Thyroid gland (tissue), 4 donors: ENCODE measurements at regions of chr4 and their contacts with region 1.

Region 1: DNA sequence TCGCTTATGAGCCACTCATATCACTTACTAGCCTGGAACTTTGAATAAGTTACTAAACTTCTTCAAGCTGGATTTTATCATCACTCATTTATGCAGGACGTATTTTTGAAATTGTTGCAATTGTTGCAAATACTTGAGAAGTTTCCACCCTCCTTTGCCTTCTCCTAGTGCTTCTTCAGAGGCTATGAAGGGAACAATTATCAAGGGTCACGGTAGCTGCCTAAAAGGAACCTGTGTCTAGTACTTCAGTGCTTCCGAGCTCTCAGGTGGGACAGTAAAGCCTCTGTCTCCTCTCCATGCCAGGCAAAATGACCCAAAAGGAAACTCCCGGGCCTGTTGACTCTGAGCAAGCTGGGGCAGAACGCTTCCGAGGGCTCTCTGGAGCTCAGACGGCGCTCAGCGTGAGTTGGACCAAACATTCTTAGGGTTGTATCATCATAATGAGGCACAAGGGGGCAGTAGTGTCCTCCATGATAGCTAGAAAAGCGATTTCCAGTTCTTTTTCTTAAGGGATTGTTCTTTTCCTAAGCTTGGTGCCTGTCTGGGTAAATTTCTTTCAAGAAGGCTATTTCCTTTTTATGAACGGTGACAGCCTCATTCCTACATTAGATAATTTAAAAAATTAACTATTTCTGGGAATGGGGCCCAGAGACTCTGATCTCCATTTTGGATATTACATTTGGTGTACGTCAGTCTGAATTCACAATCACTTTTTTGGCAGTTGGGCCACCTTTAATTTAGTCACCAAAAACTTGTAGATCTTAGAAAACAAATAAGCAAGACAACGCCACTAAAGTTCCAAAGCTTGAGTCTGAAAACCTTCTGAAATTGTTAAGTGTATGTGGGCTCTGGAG is 73.1 kb downstream of the PACRGL start:
- DNase-seq: peak; percentile 41 to 56
- H3K4me3 ChIP-seq: no peak overlapping the region
- H3K27ac ChIP-seq: no peak overlapping the region
- H3K4me1 ChIP-seq: no peaks in the 10 kb centered on the region
- H3K27me3 ChIP-seq: no peaks in the 10 kb centered on the region
- CTCF ChIP-seq: peak in 5 of 6 experiments; percentile 39 to 71 (median 63)
- POLR2A ChIP-seq: no peak

Region 2: GRCh38 chr4:21134994-21135393 is 361.6 kb after region 1 on chr4:
- intact Hi-C with region 1: loop called (anchors 10 kb)
- DNase-seq: no peak
- H3K4me3 ChIP-seq: no peak overlapping the region
- H3K27ac ChIP-seq: no peak overlapping the region
- H3K4me1 ChIP-seq: no peaks in the 10 kb centered on the region
- H3K27me3 ChIP-seq: no peaks in the 10 kb centered on the region
- CTCF ChIP-seq: peak in 2 of 6 experiments; percentile 12 to 14
- POLR2A ChIP-seq: no peak

Region 3: DNA sequence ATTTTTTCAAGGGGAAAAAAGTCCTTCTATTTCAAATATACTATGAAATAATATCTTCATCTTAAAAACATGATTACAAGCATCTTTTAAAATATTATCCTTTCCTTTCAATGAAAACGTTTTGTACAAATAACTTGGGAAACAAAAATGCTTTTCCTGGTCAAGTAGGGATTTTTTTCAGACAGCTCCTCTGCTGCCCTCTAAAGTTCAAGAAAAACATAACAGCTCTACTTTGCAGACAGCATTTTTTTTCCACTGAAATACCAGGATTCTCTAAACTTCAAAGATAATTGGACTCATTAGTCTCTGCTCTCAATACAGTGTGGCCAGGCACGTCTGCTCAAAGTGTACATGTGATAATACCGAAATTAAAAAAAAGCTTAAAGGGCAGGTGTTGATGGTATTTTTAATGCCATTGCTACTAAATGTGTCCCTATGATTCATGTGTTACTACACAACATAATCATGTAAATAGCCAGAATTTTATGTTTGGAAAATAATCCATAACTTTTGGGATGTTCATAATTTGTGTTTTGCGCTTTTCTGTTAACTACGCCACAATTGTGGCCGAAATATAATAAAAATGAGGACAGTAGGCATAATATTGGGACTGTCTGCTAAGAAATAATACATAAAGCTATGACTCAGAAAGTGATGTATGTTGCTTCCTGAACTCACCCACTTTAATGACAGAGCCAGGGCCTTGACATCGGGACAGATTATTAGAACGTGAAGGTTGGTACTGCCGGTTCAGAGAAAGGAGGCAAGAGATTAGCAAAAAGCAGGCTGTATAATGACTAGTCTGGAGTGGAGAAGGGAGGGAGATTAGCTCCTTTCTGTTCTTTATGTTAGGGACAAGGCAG is 696.3 kb after region 1 on chr4:
- intact Hi-C with region 1: loop called (anchors 10 kb)
- DNase-seq: no peak
- H3K4me3 ChIP-seq: no peak overlapping the region
- H3K27ac ChIP-seq: no peak overlapping the region
- H3K4me1 ChIP-seq: no peaks in the 10 kb centered on the region
- H3K27me3 ChIP-seq: no peaks in the 10 kb centered on the region
- CTCF ChIP-seq: peak in 5 of 6 experiments; percentile 45 to 75 (median 70)
- POLR2A ChIP-seq: no peak